ENCODE measurements at regions of chr2 and their contacts with region 1.

Region 1: GRCh38 chr2:151828143-151828889 is at the start of gene ARL5A:
- DNase-seq: peak; percentile 97
- ATAC-seq: peak; percentile 95
- H3K4me3 Mint-ChIP-seq: peak within 1 kb of the TSS; percentile 83
- H3K27ac Mint-ChIP-seq: peak within 1 kb of the TSS; percentile 93
- H3K4me1 Mint-ChIP-seq: peaks cover 50% of the 10 kb centered on the region
- H3K27me3 Mint-ChIP-seq: no peaks in the 10 kb centered on the region
- CTCF ChIP-seq: no peak
- total RNA-seq, gene ARL5A: 51.0 and 53.2 TPM in 2 replicates

Region 2: DNA sequence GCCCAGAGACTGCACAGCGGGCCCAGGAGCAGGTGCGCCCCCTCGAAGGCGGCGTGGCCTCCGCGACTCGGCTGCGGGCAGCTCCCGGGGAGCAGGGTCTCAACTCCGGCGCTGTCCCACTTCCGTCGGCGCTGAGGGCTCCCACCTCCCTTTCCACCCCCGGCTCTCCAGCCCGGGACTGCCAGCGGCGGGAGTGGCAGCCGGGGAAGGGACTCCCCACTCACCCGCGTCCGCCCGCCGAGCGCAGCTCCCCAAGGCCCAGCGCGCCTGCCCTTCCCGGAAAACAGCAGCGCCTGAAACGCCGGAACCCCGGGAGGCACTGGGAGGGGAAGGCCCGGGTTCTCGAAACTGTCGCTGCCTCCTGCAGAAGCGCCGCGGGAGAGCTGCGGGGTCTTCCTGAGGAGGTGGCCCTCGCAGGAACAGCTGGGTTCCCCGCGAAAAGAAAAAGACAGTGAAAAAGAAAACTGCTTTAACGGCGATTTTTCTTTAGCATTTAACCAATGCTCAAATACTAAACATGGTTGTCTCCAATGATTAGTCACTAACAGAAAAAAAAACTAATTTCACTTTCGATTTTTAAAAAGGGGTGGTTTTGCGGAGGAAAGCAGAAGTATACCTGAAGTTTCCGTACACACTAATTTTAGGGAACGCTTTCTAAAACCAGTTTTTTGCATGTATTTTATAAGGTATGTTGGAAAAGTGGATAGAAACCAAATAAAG is 538.8 kb before region 1 on chr2 and contains the start of gene NMI:
- CTCF ChIA-PET with region 1: no interaction called
- POLR2A ChIA-PET with region 1: interaction called, 4 read pairs
- intact Hi-C with region 1: loop called (anchors 5 kb)
- DNase-seq: peak; percentile 75
- ATAC-seq: peak; percentile 76
- H3K4me3 Mint-ChIP-seq: peak within 1 kb of the TSS; percentile 85
- H3K27ac Mint-ChIP-seq: peak within 1 kb of the TSS; percentile 94
- H3K4me1 Mint-ChIP-seq: peaks cover 44% of the 10 kb centered on the region
- H3K27me3 Mint-ChIP-seq: no peaks in the 10 kb centered on the region
- CTCF ChIP-seq: no peak
- total RNA-seq, gene NMI: 34.6 and 36.7 TPM in 2 replicates

Region 3: DNA sequence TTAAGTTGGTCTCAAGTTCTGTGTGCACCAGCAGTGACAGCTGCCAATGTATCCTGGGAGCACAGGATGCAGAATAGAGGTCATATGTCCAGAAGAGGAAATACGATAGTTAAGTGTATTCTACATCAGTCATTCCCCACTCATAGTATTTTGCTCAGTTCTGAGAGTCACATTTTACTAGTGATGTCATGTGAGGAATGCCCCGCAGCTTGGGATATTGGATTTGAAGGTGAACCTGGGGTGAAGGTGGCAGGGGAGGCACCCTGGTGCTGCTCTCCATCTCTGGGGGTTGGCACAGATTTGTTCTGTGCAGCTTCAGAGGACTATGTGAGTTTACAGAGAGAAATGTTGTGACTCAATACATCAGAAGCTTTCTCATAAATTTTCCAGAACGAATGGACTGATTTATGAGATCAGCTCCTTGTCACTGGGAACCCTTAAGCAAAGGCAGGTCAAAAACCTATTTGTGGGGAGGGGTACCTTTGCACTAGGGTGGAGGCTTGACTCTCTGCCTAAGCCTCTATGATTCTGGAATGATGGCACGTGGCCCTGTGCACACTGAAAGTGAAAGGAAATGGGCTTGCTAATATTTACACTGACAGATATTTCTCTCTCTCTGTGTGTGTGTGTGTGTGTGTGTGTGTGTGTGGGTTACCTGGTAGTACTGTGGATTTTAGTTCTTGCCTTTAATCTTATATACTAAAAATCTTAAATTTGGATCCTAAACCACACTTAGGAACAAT is 190.0 kb before region 1 on chr2:
- CTCF ChIA-PET with region 1: no interaction called
- POLR2A ChIA-PET with region 1: interaction called, 11 read pairs
- intact Hi-C with region 1: no loop called
- DNase-seq: no peak
- ATAC-seq: peak; percentile 25
- H3K4me3 Mint-ChIP-seq: peak overlapping the region; percentile 56
- H3K27ac Mint-ChIP-seq: peak overlapping the region; percentile 84
- H3K4me1 Mint-ChIP-seq: peaks cover 32% of the 10 kb centered on the region
- H3K27me3 Mint-ChIP-seq: no peaks in the 10 kb centered on the region
- CTCF ChIP-seq: no peak

Region 4: DNA sequence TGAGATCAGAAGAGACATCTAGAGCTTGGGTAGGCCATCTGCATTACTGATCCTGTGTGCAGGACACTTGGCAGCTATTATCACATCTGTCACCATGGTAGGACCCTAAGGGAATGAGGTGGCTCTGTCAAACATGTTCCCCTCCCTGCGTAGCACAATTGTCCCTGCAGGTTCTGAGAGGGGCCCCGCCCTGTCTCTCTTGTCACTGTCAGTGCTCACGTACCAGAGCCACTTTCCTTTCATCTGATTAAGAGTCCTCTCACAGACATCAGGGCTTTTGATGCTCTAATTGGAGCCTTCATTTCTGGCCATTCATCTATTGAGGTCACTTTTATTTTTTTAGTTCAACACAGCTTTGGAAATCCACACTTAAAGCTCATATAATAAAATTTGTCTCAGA is 132.5 kb before region 1 on chr2:
- CTCF ChIA-PET with region 1: no interaction called
- POLR2A ChIA-PET with region 1: no interaction called
- intact Hi-C with region 1: no loop called
- DNase-seq: no peak
- ATAC-seq: no peak
- H3K4me3 Mint-ChIP-seq: no peak overlapping the region
- H3K27ac Mint-ChIP-seq: no peak overlapping the region
- H3K4me1 Mint-ChIP-seq: no peaks in the 10 kb centered on the region
- H3K27me3 Mint-ChIP-seq: no peaks in the 10 kb centered on the region
- CTCF ChIP-seq: no peak

Region 5: DNA sequence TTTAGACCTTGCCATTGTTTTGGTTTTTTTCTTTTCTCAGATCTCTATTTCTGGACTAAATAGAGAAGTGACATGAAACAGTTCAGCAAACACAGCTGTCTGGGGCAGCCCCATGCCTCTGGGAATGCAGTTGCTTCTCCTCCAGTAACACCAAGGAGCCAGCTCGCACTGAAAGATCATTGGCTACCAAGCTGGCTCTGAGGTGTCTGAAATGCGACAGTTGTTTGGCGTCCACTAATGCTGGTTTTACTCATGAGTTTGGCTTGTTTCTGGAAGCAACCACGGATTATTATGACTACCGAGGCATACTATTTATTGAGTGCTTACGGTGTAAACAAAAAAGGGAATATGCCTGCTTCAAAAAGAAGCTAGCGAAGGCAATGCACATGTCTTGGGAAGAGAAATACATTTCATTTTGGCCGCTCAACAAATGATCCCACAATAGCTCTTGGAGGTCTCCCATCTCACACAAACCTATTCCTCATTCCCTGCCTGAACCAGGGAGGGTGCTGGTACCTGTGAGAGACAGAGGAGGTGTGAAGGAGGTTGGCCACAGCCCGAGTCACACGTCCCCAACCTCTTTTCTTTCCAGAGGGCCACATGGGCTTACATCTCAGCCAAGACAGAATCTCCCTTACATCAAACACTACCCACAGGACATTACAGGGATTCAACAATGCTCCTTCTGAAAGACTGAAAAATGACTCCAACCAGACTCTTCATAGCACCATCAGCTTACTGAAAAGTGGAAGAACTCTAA is 56.5 kb before region 1 on chr2:
- CTCF ChIA-PET with region 1: no interaction called
- POLR2A ChIA-PET with region 1: interaction called, 25 read pairs
- intact Hi-C with region 1: loop called (anchors 1 kb)
- DNase-seq: peak; percentile 66
- ATAC-seq: peak; percentile 82
- H3K4me3 Mint-ChIP-seq: peak overlapping the region; percentile 60
- H3K27ac Mint-ChIP-seq: peak overlapping the region; percentile 98
- H3K4me1 Mint-ChIP-seq: peaks cover 94% of the 10 kb centered on the region
- H3K27me3 Mint-ChIP-seq: no peaks in the 10 kb centered on the region
- CTCF ChIP-seq: no peak

Region 6: DNA sequence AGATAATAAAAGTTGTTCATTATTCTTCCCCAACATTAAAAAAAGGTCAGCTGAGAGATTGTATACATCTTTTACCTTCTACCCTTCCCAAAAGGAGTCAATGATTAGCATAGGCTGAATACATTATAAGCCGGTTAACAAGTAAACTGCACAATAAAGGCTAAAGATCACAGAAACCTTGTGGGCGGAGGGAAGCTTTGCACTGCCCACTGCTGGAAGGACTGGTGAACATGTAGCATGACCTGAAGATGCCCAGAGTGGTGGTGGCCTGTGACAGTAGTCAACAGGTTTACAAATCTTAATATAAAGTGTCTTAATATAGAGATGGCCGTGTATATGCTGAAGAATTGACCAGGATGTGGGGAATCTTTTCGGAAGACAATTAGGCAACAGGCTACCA is 35.7 kb before region 1 on chr2:
- CTCF ChIA-PET with region 1: no interaction called
- POLR2A ChIA-PET with region 1: no interaction called
- intact Hi-C with region 1: no loop called
- DNase-seq: no peak
- ATAC-seq: peak; percentile 62
- H3K4me3 Mint-ChIP-seq: no peak overlapping the region
- H3K27ac Mint-ChIP-seq: no peak overlapping the region
- H3K4me1 Mint-ChIP-seq: peaks cover 8% of the 10 kb centered on the region
- H3K27me3 Mint-ChIP-seq: no peaks in the 10 kb centered on the region
- CTCF ChIP-seq: no peak

Region 7: GRCh38 chr2:151855111-151855510 is 26.8 kb after region 1 on chr2:
- CTCF ChIA-PET with region 1: no interaction called
- POLR2A ChIA-PET with region 1: interaction called, 6 read pairs
- intact Hi-C with region 1: loop called (anchors 2 kb)
- DNase-seq: no peak
- ATAC-seq: no peak
- H3K4me3 Mint-ChIP-seq: peak overlapping the region; percentile 60
- H3K27ac Mint-ChIP-seq: peak overlapping the region; percentile 54
- H3K4me1 Mint-ChIP-seq: peaks cover 4% of the 10 kb centered on the region
- H3K27me3 Mint-ChIP-seq: no peaks in the 10 kb centered on the region
- CTCF ChIP-seq: no peak

Region 8: GRCh38 chr2:151931030-151931618 is 102.8 kb after region 1 on chr2:
- CTCF ChIA-PET with region 1: no interaction called
- POLR2A ChIA-PET with region 1: no interaction called
- intact Hi-C with region 1: no loop called
- DNase-seq: no peak
- ATAC-seq: no peak
- H3K4me3 Mint-ChIP-seq: no peak overlapping the region
- H3K27ac Mint-ChIP-seq: no peak overlapping the region
- H3K4me1 Mint-ChIP-seq: no peaks in the 10 kb centered on the region
- H3K27me3 Mint-ChIP-seq: peaks cover 18% of the 10 kb centered on the region
- CTCF ChIP-seq: no peak

Region 9: DNA sequence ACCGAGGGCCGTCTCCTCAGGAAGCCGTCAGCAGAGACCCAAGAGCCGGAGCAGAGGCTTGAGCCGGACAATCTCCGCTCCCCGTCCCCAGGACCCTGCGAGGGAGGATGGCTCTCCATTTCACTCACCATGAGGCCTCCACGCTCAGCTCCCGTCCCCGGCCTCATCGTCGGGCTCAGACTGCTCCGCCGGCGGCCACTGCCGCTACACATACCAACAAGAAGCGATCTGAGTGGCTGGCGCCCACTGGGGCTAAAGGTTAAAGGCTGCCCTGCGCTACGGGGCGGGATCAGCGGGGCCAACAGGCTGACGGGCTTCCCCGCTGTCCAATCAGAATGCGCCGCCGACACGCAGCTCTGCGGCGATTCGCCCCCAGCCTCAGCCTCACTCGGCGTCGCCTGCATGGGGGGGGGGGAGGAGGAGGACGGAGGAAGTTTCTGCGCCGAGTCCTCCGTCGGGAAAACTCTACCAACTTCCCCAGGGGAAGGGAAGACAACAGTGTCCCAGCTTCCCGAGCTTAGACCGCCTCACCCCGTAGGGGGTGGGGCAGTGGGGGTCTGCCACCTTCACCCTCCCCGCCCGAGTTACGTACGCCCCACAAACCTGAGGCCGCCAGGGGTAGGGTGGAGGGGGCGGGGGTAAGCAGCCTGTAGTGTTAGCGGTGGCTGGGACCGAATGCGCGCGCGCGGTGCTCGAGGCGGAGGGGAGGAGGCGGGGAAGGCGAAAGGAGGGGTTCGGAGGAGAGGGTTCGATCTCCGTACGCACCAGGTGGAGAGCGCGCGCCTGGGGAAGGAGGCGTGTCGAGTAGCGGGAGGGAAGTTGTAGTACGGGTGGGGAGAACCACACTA is 889.1 kb after region 1 on chr2 and contains the start of gene PRPF40A:
- CTCF ChIA-PET with region 1: no interaction called
- POLR2A ChIA-PET with region 1: interaction called, 17 read pairs
- intact Hi-C with region 1: loop called (anchors 1 kb)
- DNase-seq: peak; percentile 97
- ATAC-seq: peak; percentile 76
- H3K4me3 Mint-ChIP-seq: peak within 1 kb of the TSS; percentile 100
- H3K27ac Mint-ChIP-seq: peak within 1 kb of the TSS; percentile 98
- H3K4me1 Mint-ChIP-seq: peaks cover 51% of the 10 kb centered on the region
- H3K27me3 Mint-ChIP-seq: no peaks in the 10 kb centered on the region
- CTCF ChIP-seq: no peak
- total RNA-seq, gene PRPF40A: 126 and 129 TPM in 2 replicates